K562 (cell line): ENCODE measurements at regions of chr6 and their contacts with region 1.

Region 1: GRCh38 chr6:142692942-142693341 is 252.0 kb downstream of the HIVEP2 start:
- DNase-seq: peak; percentile 60 to 69 (median 66)
- ATAC-seq: peak; percentile 92
- H3K4me3 ChIP-seq: no peak overlapping the region
- H3K27ac ChIP-seq: no peak overlapping the region
- H3K4me1 ChIP-seq: no peaks in the 10 kb centered on the region
- H3K27me3 ChIP-seq: peaks cover 0 to 13% of the 10 kb centered on the region in 2 experiments; a peak in 3 of 5 replicates
- CTCF ChIP-seq: peak; percentile 82 to 94 (median 93)
- EP300 ChIP-seq: no peak
- POLR2A ChIP-seq: no peak
- RAD21 ChIP-seq: peak; percentile 97

Region 2: GRCh38 chr6:142474531-142475289 is 218.2 kb before region 1 on chr6:
- CTCF ChIA-PET with region 1: no interaction called
- POLR2A ChIA-PET with region 1: no interaction called
- in situ Hi-C with region 1: no loop called
- intact Hi-C with region 1: loop called (anchors 2 kb)
- DNase-seq: peak; percentile 52 to 60 (median 58)
- ATAC-seq: peak; percentile 89
- H3K4me3 ChIP-seq: no peak overlapping the region
- H3K27ac ChIP-seq: no peak overlapping the region
- H3K4me1 ChIP-seq: no peaks in the 10 kb centered on the region
- H3K27me3 ChIP-seq: no peaks in the 10 kb centered on the region
- CTCF ChIP-seq: peak; percentile 61 to 85 (median 64); a peak in 5 of 6 replicates
- EP300 ChIP-seq: no peak
- POLR2A ChIP-seq: no peak
- RAD21 ChIP-seq: peak; percentile 88 to 91

Region 3: GRCh38 chr6:142666599-142667185 is 26.2 kb before region 1 on chr6:
- CTCF ChIA-PET with region 1: no interaction called
- POLR2A ChIA-PET with region 1: no interaction called
- in situ Hi-C with region 1: no loop called
- intact Hi-C with region 1: no loop called
- DNase-seq: no peak
- ATAC-seq: no peak
- H3K4me3 ChIP-seq: no peak overlapping the region
- H3K27ac ChIP-seq: no peak overlapping the region
- H3K4me1 ChIP-seq: no peaks in the 10 kb centered on the region
- H3K27me3 ChIP-seq: no peaks in the 10 kb centered on the region
- CTCF ChIP-seq: no peak
- EP300 ChIP-seq: no peak
- POLR2A ChIP-seq: no peak
- RAD21 ChIP-seq: no peak

Region 4: GRCh38 chr6:142819603-142820337 is 126.8 kb after region 1 on chr6:
- CTCF ChIA-PET with region 1: no interaction called
- POLR2A ChIA-PET with region 1: no interaction called
- in situ Hi-C with region 1: no loop called
- intact Hi-C with region 1: loop called (anchors 1 kb)
- DNase-seq: no peak
- ATAC-seq: 0 out of 3 replicates have a peak, but pooled peaks have one; percentile 22
- H3K4me3 ChIP-seq: no peak overlapping the region
- H3K27ac ChIP-seq: no peak overlapping the region
- H3K4me1 ChIP-seq: no peaks in the 10 kb centered on the region
- H3K27me3 ChIP-seq: no peaks in the 10 kb centered on the region
- CTCF ChIP-seq: no peak
- EP300 ChIP-seq: no peak
- POLR2A ChIP-seq: no peak
- RAD21 ChIP-seq: no peak

Region 5: GRCh38 chr6:143026696-143027449 is 333.9 kb after region 1 on chr6:
- CTCF ChIA-PET with region 1: interaction called, 3 read pairs
- POLR2A ChIA-PET with region 1: no interaction called
- in situ Hi-C with region 1: no loop called
- intact Hi-C with region 1: loop called (anchors 1 kb)
- DNase-seq: peak in 1 of 4 experiments; percentile 45
- ATAC-seq: peak; percentile 87
- H3K4me3 ChIP-seq: no peak overlapping the region
- H3K27ac ChIP-seq: no peak overlapping the region
- H3K4me1 ChIP-seq: no peaks in the 10 kb centered on the region
- H3K27me3 ChIP-seq: no peaks in the 10 kb centered on the region
- CTCF ChIP-seq: peak; percentile 63 to 71 (median 66)
- EP300 ChIP-seq: no peak
- POLR2A ChIP-seq: no peak
- RAD21 ChIP-seq: peak; percentile 27 to 74; a peak in 3 of 4 replicates

Region 6: DNA sequence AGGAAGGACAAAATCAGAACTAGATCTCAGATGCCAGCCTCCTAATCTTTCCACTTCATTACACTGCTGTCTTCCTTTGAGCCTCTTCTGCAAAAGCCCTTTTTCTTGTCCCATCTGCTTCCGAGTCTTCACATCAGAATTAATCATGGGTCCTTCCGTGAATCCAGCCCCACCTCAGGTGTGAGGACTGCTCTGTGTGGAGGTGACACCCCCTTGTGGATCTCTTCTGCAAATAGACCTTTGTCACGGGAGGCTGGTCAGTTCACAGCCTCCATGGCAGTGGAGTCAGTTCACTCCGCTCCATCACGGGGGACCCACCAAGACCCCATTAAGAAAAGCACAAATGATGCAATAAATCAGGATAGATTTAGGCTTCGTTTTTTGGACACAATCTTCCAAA is 586.4 kb after region 1 on chr6:
- CTCF ChIA-PET with region 1: interaction called, 16 read pairs
- POLR2A ChIA-PET with region 1: no interaction called
- in situ Hi-C with region 1: loop called (anchors 25 kb)
- intact Hi-C with region 1: loop called (anchors 1 kb)
- DNase-seq: peak; percentile 39 to 64 (median 59)
- ATAC-seq: peak; percentile 99
- H3K4me3 ChIP-seq: no peak overlapping the region
- H3K27ac ChIP-seq: no peak overlapping the region
- H3K4me1 ChIP-seq: no peaks in the 10 kb centered on the region
- H3K27me3 ChIP-seq: no peaks in the 10 kb centered on the region
- CTCF ChIP-seq: peak; percentile 69 to 80 (median 70)
- EP300 ChIP-seq: no peak
- POLR2A ChIP-seq: no peak
- RAD21 ChIP-seq: peak; percentile 60 to 81

Region 7: GRCh38 chr6:143337201-143337949 is 644.4 kb after region 1 on chr6:
- CTCF ChIA-PET with region 1: no interaction called
- POLR2A ChIA-PET with region 1: no interaction called
- in situ Hi-C with region 1: no loop called
- intact Hi-C with region 1: loop called (anchors 2 kb)
- DNase-seq: peak; percentile 49 to 78 (median 57)
- ATAC-seq: peak; percentile 98
- H3K4me3 ChIP-seq: no peak overlapping the region
- H3K27ac ChIP-seq: no peak overlapping the region
- H3K4me1 ChIP-seq: no peaks in the 10 kb centered on the region
- H3K27me3 ChIP-seq: no peaks in the 10 kb centered on the region; a peak in 1 of 5 replicates
- CTCF ChIP-seq: peak; percentile 71 to 87 (median 79)
- EP300 ChIP-seq: no peak
- POLR2A ChIP-seq: no peak
- RAD21 ChIP-seq: peak; percentile 17 to 79; a peak in 3 of 4 replicates

Region 8: GRCh38 chr6:143427109-143427817 is 734.3 kb after region 1 on chr6:
- CTCF ChIA-PET with region 1: interaction called, 6 read pairs
- POLR2A ChIA-PET with region 1: no interaction called
- in situ Hi-C with region 1: no loop called
- intact Hi-C with region 1: loop called (anchors 1 kb)
- DNase-seq: peak; percentile 67 to 80 (median 78)
- ATAC-seq: peak; percentile 100
- H3K4me3 ChIP-seq: no peak overlapping the region
- H3K27ac ChIP-seq: no peak overlapping the region
- H3K4me1 ChIP-seq: no peaks in the 10 kb centered on the region
- H3K27me3 ChIP-seq: no peaks in the 10 kb centered on the region
- CTCF ChIP-seq: peak; percentile 86 to 98 (median 94)
- EP300 ChIP-seq: no peak
- POLR2A ChIP-seq: peak; percentile 46
- RAD21 ChIP-seq: peak; percentile 93 to 97